IMR-90 (cell line): ENCODE measurements at regions of chr5 and their contacts with region 1.

Region 1: GRCh38 chr5:126965061-126965475 is 65.3 kb downstream of the MARCHF3 start:
- DNase-seq: peak; percentile 97
- ATAC-seq: peak; percentile 45
- H3K4me3 ChIP-seq: no peak overlapping the region
- H3K27ac ChIP-seq: no peak overlapping the region
- H3K4me1 ChIP-seq: peaks cover 11% of the 10 kb centered on the region
- H3K27me3 ChIP-seq: no peaks in the 10 kb centered on the region
- CTCF ChIP-seq: no peak
- POLR2A ChIP-seq: no peak
- RAD21 ChIP-seq: no peak

Region 2: DNA sequence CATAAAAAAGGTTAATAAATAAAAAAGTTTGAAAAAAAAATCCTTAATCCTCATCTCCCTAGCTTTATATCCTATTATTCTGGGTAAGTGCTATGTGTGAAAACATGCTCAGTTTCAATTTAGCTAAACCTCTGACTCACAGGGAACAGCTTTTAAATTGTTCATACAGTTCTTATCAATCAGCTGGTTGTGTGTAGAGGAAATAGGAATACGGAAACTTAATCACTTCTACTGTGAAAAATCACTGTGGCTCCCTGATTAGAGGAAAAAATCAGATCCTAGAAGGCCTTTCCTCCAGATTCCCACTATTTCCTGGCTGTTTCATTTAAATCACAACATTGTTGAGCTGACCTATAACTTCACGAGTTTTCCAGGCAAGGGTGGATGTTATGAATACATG is 55.2 kb before region 1 on chr5:
- CTCF ChIA-PET with region 1: no interaction called
- POLR2A ChIA-PET with region 1: no interaction called
- dilution Hi-C with region 1: no loop called
- in situ Hi-C with region 1: no loop called
- intact Hi-C with region 1: no loop called
- DNase-seq: no peak
- ATAC-seq: no peak
- H3K4me3 ChIP-seq: no peak overlapping the region
- H3K27ac ChIP-seq: no peak overlapping the region
- H3K4me1 ChIP-seq: no peaks in the 10 kb centered on the region
- H3K27me3 ChIP-seq: no peaks in the 10 kb centered on the region
- CTCF ChIP-seq: no peak
- POLR2A ChIP-seq: no peak
- RAD21 ChIP-seq: no peak

Region 3: GRCh38 chr5:127001621-127002296 is 36.7 kb after region 1 on chr5:
- CTCF ChIA-PET with region 1: no interaction called
- POLR2A ChIA-PET with region 1: no interaction called
- dilution Hi-C with region 1: no loop called
- in situ Hi-C with region 1: no loop called
- intact Hi-C with region 1: loop called (anchors 5 kb)
- DNase-seq: peak; percentile 98
- ATAC-seq: peak; percentile 92
- H3K4me3 ChIP-seq: no peak overlapping the region
- H3K27ac ChIP-seq: peak overlapping the region; percentile 52
- H3K4me1 ChIP-seq: peaks cover 14% of the 10 kb centered on the region
- H3K27me3 ChIP-seq: no peaks in the 10 kb centered on the region
- CTCF ChIP-seq: no peak
- POLR2A ChIP-seq: no peak
- RAD21 ChIP-seq: no peak

Region 4: DNA sequence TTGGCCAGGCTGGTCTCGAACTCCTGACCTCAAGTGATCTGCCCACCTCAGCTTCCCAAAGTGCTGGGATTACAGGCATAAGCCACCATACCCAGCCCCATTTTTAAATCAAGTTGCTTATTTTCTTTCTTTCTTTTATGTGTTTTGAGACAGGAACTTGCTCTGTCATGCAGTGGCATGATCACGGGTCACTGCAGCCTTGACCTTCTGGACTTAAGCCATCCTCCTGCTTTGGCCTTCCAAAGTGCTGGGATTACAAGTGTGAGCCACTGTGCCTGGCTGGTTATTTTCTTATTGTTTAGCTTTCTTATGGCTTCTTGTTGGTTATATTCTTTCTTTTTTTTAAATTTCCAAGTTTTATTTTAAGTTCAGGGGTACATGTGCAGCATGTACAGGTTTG is 188.0 kb after region 1 on chr5:
- CTCF ChIA-PET with region 1: no interaction called
- POLR2A ChIA-PET with region 1: no interaction called
- dilution Hi-C with region 1: no loop called
- in situ Hi-C with region 1: no loop called
- intact Hi-C with region 1: no loop called
- DNase-seq: no peak
- ATAC-seq: no peak
- H3K4me3 ChIP-seq: no peak overlapping the region
- H3K27ac ChIP-seq: no peak overlapping the region
- H3K4me1 ChIP-seq: no peaks in the 10 kb centered on the region
- H3K27me3 ChIP-seq: no peaks in the 10 kb centered on the region
- CTCF ChIP-seq: no peak
- POLR2A ChIP-seq: no peak
- RAD21 ChIP-seq: no peak